ENCODE measurements at regions of chr4 and their contacts with region 1.

Region 1: DNA sequence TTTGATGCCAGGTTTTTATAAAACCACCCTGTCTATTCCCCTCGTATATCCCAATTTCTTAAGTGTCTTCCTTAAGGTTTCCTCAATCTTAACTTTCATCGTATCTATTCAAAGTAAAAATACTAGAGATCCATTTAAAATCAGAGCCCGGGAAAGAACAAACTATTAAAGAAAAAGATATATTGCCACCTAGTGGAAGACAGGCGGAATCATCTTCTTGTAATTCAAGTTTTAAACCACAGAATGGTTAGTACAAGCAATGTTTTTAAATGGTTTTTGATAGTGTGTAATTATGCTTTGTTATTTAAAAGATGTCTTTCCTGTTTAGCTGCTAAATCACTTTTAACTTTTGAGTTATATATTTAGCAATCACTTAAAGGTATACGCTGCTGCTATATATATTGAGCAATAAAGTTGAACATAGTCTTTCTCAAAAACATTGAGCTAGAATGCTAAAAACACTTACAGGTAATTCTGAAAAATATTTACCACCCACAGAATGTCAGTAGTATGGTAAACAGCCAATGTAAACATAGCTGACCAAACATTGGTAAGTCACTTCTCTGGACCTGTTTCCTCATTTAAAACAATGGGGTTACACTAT is 18.2 kb downstream of the PRDM8 start:
- DNase-seq: peak; percentile 44
- H3K4me3 ChIP-seq: no peak overlapping the region
- H3K27ac ChIP-seq: no peak overlapping the region
- H3K4me1 ChIP-seq: no peaks in the 10 kb centered on the region
- H3K27me3 ChIP-seq: peaks cover 20 to 47% of the 10 kb centered on the region in 2 experiments
- CTCF ChIP-seq: peak; percentile 33 to 38
- POLR2A ChIP-seq: no peak

Region 2: GRCh38 chr4:79917246-79917645 is 298.3 kb before region 1 on chr4:
- CTCF ChIA-PET with region 1: interaction called, 12 read pairs
- POLR2A ChIA-PET with region 1: no interaction called
- dilution Hi-C with region 1: no loop called
- intact Hi-C with region 1: loop called (anchors 2 kb)
- DNase-seq: peak; percentile 62
- H3K4me3 ChIP-seq: no peak overlapping the region
- H3K27ac ChIP-seq: no peak overlapping the region
- H3K4me1 ChIP-seq: no peaks in the 10 kb centered on the region
- H3K27me3 ChIP-seq: no peaks in the 10 kb centered on the region
- CTCF ChIP-seq: peak; percentile 73 to 78
- POLR2A ChIP-seq: no peak

Region 3: GRCh38 chr4:80266253-80266901 is 50.8 kb after region 1 on chr4 and contains the start of gene FGF5:
- CTCF ChIA-PET with region 1: interaction called, 36 read pairs
- POLR2A ChIA-PET with region 1: no interaction called
- dilution Hi-C with region 1: no loop called
- intact Hi-C with region 1: loop called (anchors 5 kb)
- DNase-seq: peak; percentile 38
- H3K4me3 ChIP-seq: peak within 1 kb of the TSS; percentile 30 to 76 (median 64)
- H3K27ac ChIP-seq: peak within 1 kb of the TSS; percentile 49
- H3K4me1 ChIP-seq: peaks cover 12% of the 10 kb centered on the region
- H3K27me3 ChIP-seq: peaks cover 77 to 91% of the 10 kb centered on the region in 2 experiments
- CTCF ChIP-seq: no peak
- POLR2A ChIP-seq: no peak
- total RNA-seq, gene FGF5: 0.13 and 1.7 TPM in 2 replicates

Region 4: DNA sequence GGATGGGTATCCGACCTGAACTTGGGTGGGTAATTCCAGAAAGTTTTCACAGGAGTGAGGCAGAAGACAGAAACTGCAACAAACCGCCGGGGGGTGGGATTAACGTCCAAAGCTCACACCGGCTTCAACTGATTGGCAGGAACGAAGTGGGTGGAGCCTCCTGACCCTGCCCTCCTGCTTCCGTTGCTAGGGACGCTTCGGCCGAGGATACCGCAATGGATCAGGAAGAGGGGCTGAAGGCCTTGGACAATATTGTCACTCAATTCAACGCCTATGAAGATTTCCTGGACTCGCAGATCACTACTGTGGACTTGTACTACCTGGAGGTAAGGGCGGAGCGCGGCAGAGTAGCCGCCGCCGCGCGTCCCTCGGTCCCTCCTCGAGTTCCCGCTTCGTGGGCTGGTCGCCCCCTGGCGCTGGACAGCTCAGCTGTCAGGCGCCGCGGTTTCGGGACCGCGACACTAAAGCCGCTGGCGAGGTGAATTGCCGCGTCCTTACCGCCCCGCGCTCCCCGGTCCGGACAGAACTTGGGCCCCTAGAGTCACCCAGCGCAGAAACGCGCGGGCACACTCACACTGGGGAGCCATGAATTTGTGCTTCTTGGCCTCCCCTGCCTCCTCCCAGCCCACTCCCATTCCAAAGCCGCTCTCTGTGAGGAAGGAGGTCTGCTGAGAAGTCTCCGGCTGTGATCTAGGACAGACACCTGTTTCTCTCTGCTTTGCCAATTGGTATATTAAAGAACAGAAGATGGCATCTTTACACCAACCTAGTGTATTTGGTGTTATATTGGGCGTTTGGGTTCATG is 120.2 kb after region 1 on chr4 and contains the start of gene CFAP299:
- CTCF ChIA-PET with region 1: interaction called, 99 read pairs
- POLR2A ChIA-PET with region 1: no interaction called
- dilution Hi-C with region 1: no loop called
- intact Hi-C with region 1: no loop called
- DNase-seq: peak; percentile 68
- H3K4me3 ChIP-seq: peak within 1 kb of the TSS; percentile 37 to 67 (median 46)
- H3K27ac ChIP-seq: no peak within 1 kb of the TSS
- H3K4me1 ChIP-seq: peaks cover 6% of the 10 kb centered on the region
- H3K27me3 ChIP-seq: peaks cover 18 to 63% of the 10 kb centered on the region in 2 experiments
- CTCF ChIP-seq: peak; percentile 54 to 67
- POLR2A ChIP-seq: no peak
- total RNA-seq, gene CFAP299: not detected in 2 replicates

Measured in endothelial cell of umbilical vein (primary cell).